ENCODE measurements at regions of chr9 and their contacts with region 1.

Region 1: GRCh38 chr9:2132484-2133082 is 117.4 kb downstream of the SMARCA2 start:
- DNase-seq: no peak
- ATAC-seq: no peak

Region 2: DNA sequence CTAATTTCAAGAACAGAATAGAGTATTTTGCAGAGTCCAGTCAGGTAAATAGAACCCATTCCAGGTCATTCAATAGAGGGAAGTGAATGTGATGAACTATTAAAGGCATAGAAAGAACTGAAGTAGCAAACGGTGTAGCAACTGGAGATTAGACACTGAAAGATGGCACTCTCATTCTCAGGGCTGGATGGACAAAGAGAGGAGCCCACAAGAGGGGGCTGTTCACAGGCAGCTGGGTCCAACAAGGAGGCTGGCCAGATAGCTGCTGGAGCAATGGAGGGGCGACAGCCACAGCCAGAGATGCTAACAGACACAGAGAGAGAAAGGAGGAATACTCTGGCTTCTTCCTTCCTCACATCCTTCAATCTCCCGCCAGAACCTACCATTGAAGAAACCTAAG is 210.6 kb before region 1 on chr9:
- intact Hi-C with region 1: no loop called
- DNase-seq: no peak
- ATAC-seq: no peak

Region 3: GRCh38 chr9:2181792-2182191 is 49.2 kb after region 1 on chr9:
- intact Hi-C with region 1: loop called (anchors 2 kb)
- DNase-seq: peak; percentile 45
- ATAC-seq: no peak

Region 4: DNA sequence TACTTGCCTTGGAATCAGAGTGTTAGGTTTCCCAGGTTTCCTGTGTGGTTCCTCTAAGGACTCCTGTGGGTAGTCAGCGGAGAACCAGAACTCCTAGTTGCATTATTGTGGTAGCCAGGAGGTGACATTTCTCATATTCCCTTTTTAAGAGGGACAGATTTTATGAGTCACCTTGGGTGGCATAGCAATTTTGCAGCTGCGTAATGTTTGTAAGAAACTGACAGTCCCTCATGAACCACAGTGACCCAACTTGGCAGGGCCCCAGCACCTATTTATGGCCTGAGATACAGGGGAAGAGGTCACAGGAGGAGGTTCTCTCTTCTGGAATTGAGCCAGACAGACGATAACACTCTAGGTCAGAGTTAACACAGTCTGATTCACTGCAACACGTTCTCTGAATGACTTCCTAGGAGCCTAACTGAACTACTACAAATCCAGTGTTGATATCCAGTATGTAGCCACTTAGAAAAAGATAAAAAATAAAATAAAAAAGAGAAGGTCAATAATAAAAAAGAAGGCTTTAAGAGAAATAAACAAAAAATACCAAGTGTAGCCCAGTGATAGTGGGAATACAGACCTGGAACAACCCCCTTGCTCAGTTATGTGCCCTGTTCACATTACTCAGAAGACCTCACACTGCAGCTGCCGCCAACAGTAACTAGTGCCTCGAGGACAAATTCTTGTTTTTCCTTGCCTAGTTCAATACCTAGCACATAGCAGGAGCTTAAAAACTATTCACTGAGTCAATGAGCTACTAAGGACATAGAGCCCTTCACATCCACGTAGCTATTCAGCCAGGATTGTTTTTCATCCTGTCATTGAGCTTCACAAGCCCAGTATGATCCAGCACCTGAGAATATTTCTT is 438.3 kb after region 1 on chr9:
- intact Hi-C with region 1: loop called (anchors 5 kb)
- DNase-seq: peak; percentile 92
- ATAC-seq: peak; percentile 90

Region 5: GRCh38 chr9:2662496-2662895 is 529.9 kb after region 1 on chr9:
- intact Hi-C with region 1: loop called (anchors 10 kb)
- DNase-seq: no peak
- ATAC-seq: no peak

Region 6: DNA sequence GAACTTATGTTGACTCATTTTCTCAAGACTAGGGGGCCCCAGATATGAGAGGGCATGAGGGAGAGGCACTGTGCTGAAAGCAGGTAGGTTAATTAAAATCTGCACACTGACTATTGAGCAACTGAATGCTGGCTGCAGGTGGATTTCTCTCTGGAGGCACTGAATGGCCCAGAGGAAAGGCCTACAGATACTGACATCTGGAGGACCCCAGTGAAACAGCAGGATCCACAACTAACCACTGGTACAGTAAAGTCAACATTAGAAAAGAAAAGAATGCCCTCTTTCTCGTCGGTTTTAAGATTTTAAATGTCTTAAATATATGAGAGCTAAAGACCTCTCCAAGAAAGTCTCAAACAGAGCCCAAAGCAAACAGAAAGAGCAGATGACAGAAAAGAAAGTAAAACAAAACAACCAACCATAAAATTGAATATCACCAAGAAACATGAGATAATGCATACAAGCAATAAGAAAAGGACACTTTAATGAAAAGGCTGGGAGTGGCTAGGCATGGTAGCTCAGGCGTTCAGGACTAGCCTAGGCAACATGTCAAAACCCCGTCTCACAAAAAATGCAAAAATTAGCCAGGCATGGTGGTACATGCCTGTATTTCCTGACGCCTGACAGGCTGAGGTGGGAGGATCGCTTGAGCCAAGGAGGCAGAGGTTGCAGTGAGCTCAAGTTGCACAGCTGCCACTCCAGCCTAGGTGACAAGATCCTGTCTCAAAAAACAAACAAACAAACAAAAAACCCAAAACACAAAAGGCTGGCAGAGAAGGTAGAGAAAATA is 668.0 kb after region 1 on chr9:
- intact Hi-C with region 1: loop called (anchors 5 kb)
- DNase-seq: no peak
- ATAC-seq: peak; percentile 69

Measured in Right ventricle myocardium inferior (tissue), 1 donor.